CD4-positive, alpha-beta T cell (primary cell): ENCODE measurements at regions of chr22 and their contacts with region 1.

Region 1: DNA sequence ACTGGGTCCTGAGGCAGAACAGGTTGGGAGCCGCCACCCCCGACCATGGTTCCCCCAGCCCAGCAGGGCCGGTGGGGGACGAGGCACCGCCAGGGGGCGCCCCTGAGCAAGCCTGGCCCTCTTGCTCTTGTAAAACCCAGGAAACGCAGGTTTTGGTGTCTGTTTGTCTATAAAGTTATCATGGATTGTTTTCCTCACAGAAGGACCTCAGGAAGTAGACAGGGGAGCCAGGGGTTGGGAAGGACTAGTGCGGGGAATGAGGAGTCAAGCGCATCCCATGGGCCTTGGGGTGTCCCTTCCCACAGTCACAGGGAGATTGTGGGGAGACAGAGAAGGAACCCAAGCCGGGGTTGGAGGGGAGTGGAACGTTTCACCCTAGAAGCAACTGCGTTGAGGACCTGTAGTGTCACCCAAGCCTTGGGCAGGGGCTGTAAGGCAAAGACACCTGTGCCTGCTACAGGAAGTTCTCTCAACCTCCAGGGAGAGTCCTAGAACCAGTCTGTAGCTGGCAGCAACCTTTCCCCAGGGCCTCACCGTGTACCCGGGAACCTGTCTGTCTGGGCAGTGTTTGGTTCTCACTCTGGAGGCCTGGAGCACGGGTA is 26.4 kb downstream of the KCTD17 start:
- DNase-seq: peak; percentile 69 to 92 (median 84)
- ATAC-seq: peak; percentile 14
- H3K4me3 ChIP-seq: no peak overlapping the region
- H3K4me3 Mint-ChIP-seq: peak overlapping the region; percentile 12
- H3K27ac ChIP-seq: peak overlapping the region in 1 of 2 donors; percentile 5
- H3K27ac Mint-ChIP-seq: peak overlapping the region; percentile 99
- H3K4me1 ChIP-seq: peaks cover 47% of the 10 kb centered on the region
- H3K4me1 Mint-ChIP-seq: peaks cover 34% of the 10 kb centered on the region
- H3K27me3 ChIP-seq: no peaks in the 10 kb centered on the region
- H3K27me3 Mint-ChIP-seq: no peaks in the 10 kb centered on the region
- CTCF ChIP-seq: peak; percentile 99

Region 2: GRCh38 chr22:37121887-37122591 is 44.1 kb after region 1 on chr22:
- CTCF ChIA-PET with region 1: interaction called, 7 read pairs
- POLR2A ChIA-PET with region 1: interaction called, 29 read pairs
- intact Hi-C with region 1: loop called (anchors 1 to 2 kb)
- DNase-seq: peak; percentile 78 to 99 (median 88)
- ATAC-seq: peak; percentile 95
- H3K4me3 ChIP-seq: peak overlapping the region; percentile 30
- H3K4me3 Mint-ChIP-seq: peak overlapping the region; percentile 84
- H3K27ac ChIP-seq: peak overlapping the region; percentile 96
- H3K27ac Mint-ChIP-seq: peak overlapping the region; percentile 95
- H3K4me1 ChIP-seq: peaks cover 61% of the 10 kb centered on the region
- H3K4me1 Mint-ChIP-seq: peaks cover 52% of the 10 kb centered on the region
- H3K27me3 ChIP-seq: no peaks in the 10 kb centered on the region
- H3K27me3 Mint-ChIP-seq: no peaks in the 10 kb centered on the region
- CTCF ChIP-seq: peak; percentile 35

Region 3: GRCh38 chr22:37166675-37167066 is 88.7 kb after region 1 on chr22:
- CTCF ChIA-PET with region 1: interaction called, 6 read pairs
- POLR2A ChIA-PET with region 1: interaction called, 5 read pairs
- intact Hi-C with region 1: loop called (anchors 1 to 2 kb)
- DNase-seq: peak; percentile 68 to 91 (median 82)
- ATAC-seq: peak; percentile 59
- H3K4me3 ChIP-seq: peak overlapping the region; percentile 53
- H3K4me3 Mint-ChIP-seq: peak overlapping the region; percentile 69
- H3K27ac ChIP-seq: no peak overlapping the region
- H3K27ac Mint-ChIP-seq: peak overlapping the region; percentile 51
- H3K4me1 ChIP-seq: peaks cover 91% of the 10 kb centered on the region
- H3K4me1 Mint-ChIP-seq: peaks cover 82% of the 10 kb centered on the region
- H3K27me3 ChIP-seq: no peaks in the 10 kb centered on the region
- H3K27me3 Mint-ChIP-seq: no peaks in the 10 kb centered on the region
- CTCF ChIP-seq: peak; percentile 88

Region 4: GRCh38 chr22:37260901-37261336 is 182.9 kb after region 1 on chr22:
- CTCF ChIA-PET with region 1: interaction called, 3 read pairs
- POLR2A ChIA-PET with region 1: no interaction called
- intact Hi-C with region 1: loop called (anchors 5 kb)
- DNase-seq: peak in 13 of 14 experiments; percentile 49 to 81 (median 59)
- ATAC-seq: peak; percentile 80
- H3K4me3 ChIP-seq: no peak overlapping the region
- H3K4me3 Mint-ChIP-seq: no peak overlapping the region
- H3K27ac ChIP-seq: no peak overlapping the region
- H3K27ac Mint-ChIP-seq: peak overlapping the region; percentile 12
- H3K4me1 ChIP-seq: peaks cover 25% of the 10 kb centered on the region
- H3K4me1 Mint-ChIP-seq: peaks cover 24% of the 10 kb centered on the region
- H3K27me3 ChIP-seq: no peaks in the 10 kb centered on the region
- H3K27me3 Mint-ChIP-seq: no peaks in the 10 kb centered on the region
- CTCF ChIP-seq: peak; percentile 85

Region 5: DNA sequence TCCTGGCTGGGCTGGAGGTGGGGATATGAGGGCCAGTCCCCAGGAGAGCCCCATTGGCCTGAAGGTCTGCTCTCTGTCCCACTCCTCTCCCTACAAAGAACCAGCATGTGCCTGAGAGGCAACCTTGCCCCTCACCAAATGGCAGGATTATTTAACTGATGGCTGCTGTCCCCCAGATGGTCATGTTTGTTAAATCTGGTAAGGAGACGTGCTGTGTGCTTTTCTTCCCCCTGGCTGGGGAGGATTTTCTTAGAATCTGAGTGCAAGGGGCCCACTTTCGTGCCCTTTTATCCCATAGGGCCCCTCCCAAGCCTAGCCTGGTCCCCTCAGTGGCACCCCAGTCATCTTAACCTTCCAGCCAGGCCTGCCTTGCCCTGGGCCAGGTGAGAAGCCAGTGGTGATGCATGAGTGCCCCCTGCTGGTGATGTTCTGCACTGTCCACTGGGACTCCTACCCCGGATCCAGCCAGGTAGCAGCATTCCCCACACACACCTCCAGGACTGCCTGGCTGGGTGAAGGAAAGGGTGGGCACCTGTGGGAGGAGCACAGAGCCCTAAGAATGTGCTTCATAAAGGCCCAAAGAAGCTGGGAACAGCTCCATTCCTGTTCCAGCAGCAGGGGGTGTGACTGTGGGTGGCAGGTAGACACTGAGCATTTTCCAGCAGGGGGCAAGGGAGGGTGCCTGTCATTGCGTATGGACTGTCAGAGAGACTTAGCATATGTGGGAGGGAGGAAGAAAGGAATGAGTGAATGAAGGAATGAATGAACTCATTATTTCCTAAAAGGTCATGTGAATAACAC is 379.3 kb after region 1 on chr22:
- CTCF ChIA-PET with region 1: no interaction called
- POLR2A ChIA-PET with region 1: no interaction called
- intact Hi-C with region 1: loop called (anchors 2 to 5 kb)
- DNase-seq: peak; percentile 74 to 90 (median 85)
- ATAC-seq: peak; percentile 98
- H3K4me3 ChIP-seq: no peak overlapping the region
- H3K4me3 Mint-ChIP-seq: no peak overlapping the region
- H3K27ac ChIP-seq: no peak overlapping the region
- H3K27ac Mint-ChIP-seq: no peak overlapping the region
- H3K4me1 ChIP-seq: peaks cover 5% of the 10 kb centered on the region
- H3K4me1 Mint-ChIP-seq: peaks cover 6% of the 10 kb centered on the region
- H3K27me3 ChIP-seq: no peaks in the 10 kb centered on the region
- H3K27me3 Mint-ChIP-seq: no peaks in the 10 kb centered on the region
- CTCF ChIP-seq: peak; percentile 92